HEK293 (cell line): ENCODE measurements at regions of chr6 and their contacts with region 1.

Region 1: DNA sequence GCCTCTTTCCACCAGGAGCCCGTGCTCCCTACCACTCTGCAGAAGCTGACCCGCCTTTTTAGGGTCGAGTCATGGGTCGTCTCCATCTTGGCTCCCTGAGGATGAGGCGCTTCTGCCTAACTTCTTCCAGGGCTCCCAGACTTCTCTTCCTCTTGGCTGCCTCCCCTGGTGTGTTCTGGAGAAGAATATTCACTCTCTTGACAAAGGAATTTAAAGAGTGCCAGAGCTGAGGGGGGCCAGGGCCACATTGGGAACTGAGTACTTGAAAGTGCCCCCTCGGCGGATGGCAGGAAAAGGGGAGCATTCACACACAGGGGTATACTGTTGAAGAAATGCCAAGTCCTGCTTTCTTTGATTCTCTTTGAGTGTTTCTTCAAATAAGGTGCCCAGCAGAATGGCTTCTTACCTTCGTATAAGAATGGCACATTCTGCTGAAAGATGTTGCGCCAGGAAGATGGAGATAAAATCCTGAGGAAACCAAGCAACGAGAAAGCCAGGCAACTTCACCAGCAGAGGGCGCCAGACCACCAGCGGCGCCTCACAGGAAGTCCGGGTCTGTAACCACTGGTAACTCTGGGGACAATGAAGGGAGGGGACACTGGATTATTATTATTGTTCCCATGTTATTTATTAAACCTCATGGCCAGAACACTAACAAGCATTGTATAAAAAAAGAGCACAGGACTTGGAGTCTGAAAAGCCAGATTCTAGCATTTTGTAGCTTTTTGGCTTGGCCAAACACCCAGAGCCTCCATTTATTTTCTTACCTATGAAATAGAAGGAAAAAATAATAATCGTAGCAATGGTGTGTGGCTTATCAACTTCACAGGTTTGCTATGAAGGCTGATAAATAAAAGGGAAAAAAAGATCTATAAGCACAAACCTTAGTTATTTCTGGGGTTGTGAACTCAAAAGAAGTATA is 176.7 kb downstream of the HACE1 start:
- H3K4me3 ChIP-seq: no peak overlapping the region
- H3K27ac ChIP-seq: no peak overlapping the region
- H3K4me1 ChIP-seq: peaks cover 5% of the 10 kb centered on the region; the same call in 1 of the 2 replicates
- CTCF ChIP-seq: no peak

Region 2: DNA sequence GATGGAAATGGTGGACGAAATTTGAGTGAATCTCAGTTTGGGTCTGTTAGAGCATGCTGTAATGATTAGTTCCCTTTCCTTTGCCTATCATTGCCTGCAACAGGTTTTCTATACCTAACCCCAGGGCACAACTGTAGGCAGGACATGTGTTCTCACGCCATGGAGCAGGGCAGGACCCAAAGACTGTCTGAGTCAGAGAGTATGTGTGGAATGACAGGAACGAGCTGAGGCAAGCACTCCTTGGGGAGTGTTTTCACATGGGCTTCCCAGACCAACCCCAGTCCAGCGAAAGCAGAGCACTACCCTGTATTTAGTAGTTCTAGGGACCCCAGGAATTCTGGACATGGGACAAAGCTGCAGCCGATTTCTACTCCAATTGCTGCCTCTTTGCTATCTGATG is 57.4 kb before region 1 on chr6:
- CTCF ChIA-PET with region 1: no interaction called
- POLR2A ChIA-PET with region 1: no interaction called
- H3K4me3 ChIP-seq: no peak overlapping the region
- H3K27ac ChIP-seq: no peak overlapping the region
- H3K4me1 ChIP-seq: no peaks in the 10 kb centered on the region
- CTCF ChIP-seq: no peak

Region 3: DNA sequence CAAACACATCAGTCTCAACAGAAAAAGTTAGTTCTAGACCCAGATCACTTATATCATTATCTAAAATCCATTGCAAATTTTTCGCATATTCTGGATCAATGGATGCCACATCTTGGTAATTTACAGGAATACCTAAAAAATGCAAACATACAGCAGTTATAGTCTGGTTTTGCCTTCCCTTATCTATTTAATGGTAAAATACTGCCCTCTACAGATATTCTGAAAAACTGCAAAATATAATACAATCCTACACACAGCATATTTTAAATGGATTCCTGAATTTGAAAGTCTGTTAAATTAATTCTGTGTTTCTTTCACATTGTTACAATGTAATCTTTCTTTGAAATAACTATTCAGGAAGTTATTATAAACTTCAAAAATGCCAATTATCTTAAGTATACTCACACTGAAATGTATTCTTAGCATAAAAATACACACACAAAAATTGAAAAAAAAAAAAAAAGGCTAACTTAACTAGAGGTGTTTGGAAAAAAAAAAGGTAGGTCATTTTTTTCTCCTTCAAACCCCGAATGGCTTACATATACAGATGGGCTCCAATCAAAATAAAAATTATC is 88.4 kb after region 1 on chr6:
- CTCF ChIA-PET with region 1: interaction called, 55 read pairs
- POLR2A ChIA-PET with region 1: no interaction called
- H3K4me3 ChIP-seq: no peak overlapping the region
- H3K27ac ChIP-seq: no peak overlapping the region
- H3K4me1 ChIP-seq: no peaks in the 10 kb centered on the region
- CTCF ChIP-seq: no peak; the same call in 1 of the 2 replicates